ENCODE measurements at regions of chr3 and their contacts with region 1.

Region 1: GRCh38 chr3:42300013-42300412 is 34.0 kb upstream of the CCK start:
- DNase-seq: peak; percentile 73
- H3K4me3 Mint-ChIP-seq: no peak overlapping the region
- H3K27ac Mint-ChIP-seq: no peak overlapping the region
- H3K4me1 Mint-ChIP-seq: peaks cover 2% of the 10 kb centered on the region
- H3K27me3 Mint-ChIP-seq: peaks cover 10% of the 10 kb centered on the region

Region 2: GRCh38 chr3:42317137-42317536 is 17.1 kb after region 1 on chr3:
- intact Hi-C with region 1: loop called (anchors 1 kb)
- DNase-seq: no peak
- H3K4me3 Mint-ChIP-seq: no peak overlapping the region
- H3K27ac Mint-ChIP-seq: no peak overlapping the region
- H3K4me1 Mint-ChIP-seq: no peaks in the 10 kb centered on the region
- H3K27me3 Mint-ChIP-seq: no peaks in the 10 kb centered on the region

Region 3: DNA sequence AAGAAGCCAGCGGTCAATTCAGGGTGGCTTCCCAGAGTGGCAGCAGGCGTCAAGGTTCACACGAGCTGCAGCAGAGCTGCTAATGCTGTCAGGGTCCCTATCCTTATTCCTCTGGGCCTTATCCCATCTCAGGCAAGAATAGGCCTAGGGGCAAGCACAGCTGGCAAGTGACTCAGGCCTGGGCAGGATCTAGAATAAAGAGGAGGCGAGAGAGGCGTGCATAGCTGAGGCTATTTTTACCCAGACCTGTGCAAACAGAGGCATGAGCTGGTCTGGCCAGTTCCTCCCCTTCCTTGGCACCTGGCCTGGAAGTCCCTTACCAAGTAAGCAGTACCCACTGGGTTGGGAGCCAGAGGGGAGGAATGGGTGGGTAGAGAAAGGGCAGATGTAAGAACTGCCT is 190.2 kb after region 1 on chr3:
- intact Hi-C with region 1: no loop called
- DNase-seq: no peak
- H3K4me3 Mint-ChIP-seq: no peak overlapping the region
- H3K27ac Mint-ChIP-seq: no peak overlapping the region
- H3K4me1 Mint-ChIP-seq: no peaks in the 10 kb centered on the region
- H3K27me3 Mint-ChIP-seq: peaks cover 13% of the 10 kb centered on the region